ENCODE measurements at regions of chr22 and their contacts with region 1.

Region 1: DNA sequence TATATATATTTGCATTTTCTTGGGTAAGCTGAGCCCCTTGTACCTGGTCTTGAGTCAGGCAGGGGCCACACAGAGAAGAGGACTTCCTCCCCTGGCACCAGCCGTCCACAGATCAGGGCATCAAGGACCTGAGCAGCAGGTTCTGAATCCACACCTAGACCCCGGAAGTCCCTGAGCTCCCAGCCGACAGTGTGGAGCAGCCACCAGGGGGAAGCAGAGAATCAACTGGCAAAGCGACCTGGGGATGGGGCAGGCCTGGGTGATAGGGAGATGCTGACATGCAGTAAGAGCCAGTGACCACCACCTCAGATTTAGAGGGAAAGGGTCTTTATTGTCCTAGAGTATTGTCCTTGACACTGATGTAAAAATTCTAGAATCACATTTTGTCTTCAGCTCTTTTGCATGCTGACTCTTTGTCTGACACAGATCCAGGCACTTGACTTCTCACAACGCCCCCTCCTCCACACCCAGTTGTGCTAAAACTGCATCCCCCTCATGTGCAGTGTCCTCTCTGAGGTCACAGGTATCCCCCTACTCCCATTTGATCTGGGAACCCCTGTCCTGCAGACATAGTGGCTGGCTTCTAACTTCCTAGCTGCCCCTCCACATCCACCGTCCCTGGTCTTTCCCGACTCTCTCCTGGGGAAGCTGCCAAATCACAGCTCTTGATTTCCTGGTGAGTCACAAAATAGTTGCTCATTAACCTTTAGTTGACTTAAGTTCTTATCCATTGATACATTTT is 109.3 kb downstream of the GGTLC2 start:
- DNase-seq: peak; percentile 54 to 74
- ATAC-seq: peak; percentile 89 to 97
- H3K4me3 ChIP-seq: no peak overlapping the region
- H3K27ac ChIP-seq: 0 out of 6 replicates have a peak overlapping the region, but pooled peaks of 1 of the 2 experiments have one; percentile 39
- H3K4me1 ChIP-seq: peaks cover 5% of the 10 kb centered on the region; the same call in 1 of the 3 replicates
- CTCF ChIP-seq: peak; percentile 43; the same call in 2 of the 3 replicates
- EP300 ChIP-seq: no peak
- POLR2A ChIP-seq: no peak
- RAD21 ChIP-seq: peak; percentile 36 to 46; a peak in 3 of 5 replicates

Region 2: GRCh38 chr22:22463855-22464540 is 289.7 kb before region 1 on chr22:
- CTCF ChIA-PET with region 1: interaction called, 12 read pairs
- POLR2A ChIA-PET with region 1: no interaction called
- DNase-seq: peak; percentile 38 to 52
- ATAC-seq: peak; percentile 73 to 93; a peak in 5 of 6 replicates
- H3K4me3 ChIP-seq: peak overlapping the region; percentile 18; the same call in 1 of the 3 replicates
- H3K27ac ChIP-seq: no peak overlapping the region
- H3K4me1 ChIP-seq: no peaks in the 10 kb centered on the region
- CTCF ChIP-seq: peak; percentile 73
- EP300 ChIP-seq: no peak
- POLR2A ChIP-seq: no peak
- RAD21 ChIP-seq: peak; percentile 85 to 86

Region 3: GRCh38 chr22:22743128-22743760 is 10.5 kb before region 1 on chr22:
- CTCF ChIA-PET with region 1: interaction called, 11 read pairs
- POLR2A ChIA-PET with region 1: no interaction called
- DNase-seq: no peak
- ATAC-seq: no peak
- H3K4me3 ChIP-seq: no peak overlapping the region
- H3K27ac ChIP-seq: no peak overlapping the region
- H3K4me1 ChIP-seq: no peaks in the 10 kb centered on the region
- CTCF ChIP-seq: no peak
- EP300 ChIP-seq: no peak
- POLR2A ChIP-seq: no peak
- RAD21 ChIP-seq: no peak

Region 4: GRCh38 chr22:22770280-22770871 is 16.7 kb after region 1 on chr22:
- CTCF ChIA-PET with region 1: interaction called, 31 read pairs
- POLR2A ChIA-PET with region 1: no interaction called
- DNase-seq: peak; percentile 30 to 33
- ATAC-seq: peak; percentile 83 to 91
- H3K4me3 ChIP-seq: no peak overlapping the region
- H3K27ac ChIP-seq: no peak overlapping the region
- H3K4me1 ChIP-seq: no peaks in the 10 kb centered on the region
- CTCF ChIP-seq: peak; percentile 57
- EP300 ChIP-seq: no peak
- POLR2A ChIP-seq: no peak
- RAD21 ChIP-seq: peak in 1 of 2 experiments; percentile 23; a peak in 2 of 5 replicates

Region 5: DNA sequence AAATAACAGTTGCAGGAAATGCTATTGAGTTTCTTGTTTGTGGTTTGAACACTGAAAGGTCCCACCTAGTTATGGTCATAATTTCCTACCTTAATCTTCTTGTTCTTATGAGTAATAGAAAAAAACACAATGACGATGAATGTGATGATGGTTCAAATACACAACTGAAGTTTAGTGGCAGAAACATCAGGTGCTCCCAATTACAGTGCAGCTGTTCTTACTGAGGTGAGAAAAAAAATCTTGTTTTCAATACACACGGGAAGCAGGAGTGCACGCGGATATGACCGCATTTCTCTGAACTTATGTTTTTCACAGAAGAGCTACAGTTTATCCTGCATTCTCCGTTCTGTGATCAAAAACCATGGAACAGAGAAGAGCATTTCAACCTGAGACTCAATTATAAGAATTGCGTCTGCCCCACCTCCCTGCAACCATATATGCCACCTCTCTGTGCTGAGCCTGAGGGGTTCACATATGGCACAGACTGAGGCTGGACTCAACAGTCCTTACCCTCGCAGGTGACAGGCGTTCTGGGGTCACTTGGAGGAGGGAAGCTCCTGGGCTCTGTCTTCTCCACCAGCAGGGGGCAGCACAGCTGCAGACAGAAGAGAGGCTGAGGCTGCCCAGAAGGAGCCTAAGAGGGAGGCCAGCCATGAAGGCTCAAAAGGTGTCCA is 34.2 kb after region 1 on chr22:
- CTCF ChIA-PET with region 1: interaction called, 10 read pairs
- POLR2A ChIA-PET with region 1: no interaction called
- DNase-seq: peak; percentile 39 to 52
- ATAC-seq: peak; percentile 80 to 95; a peak in 5 of 6 replicates
- H3K4me3 ChIP-seq: no peak overlapping the region
- H3K27ac ChIP-seq: no peak overlapping the region
- H3K4me1 ChIP-seq: no peaks in the 10 kb centered on the region
- CTCF ChIP-seq: peak; percentile 58; the same call in 2 of the 3 replicates
- EP300 ChIP-seq: no peak
- POLR2A ChIP-seq: no peak
- RAD21 ChIP-seq: peak; percentile 30 to 46; a peak in 4 of 5 replicates

Region 6: DNA sequence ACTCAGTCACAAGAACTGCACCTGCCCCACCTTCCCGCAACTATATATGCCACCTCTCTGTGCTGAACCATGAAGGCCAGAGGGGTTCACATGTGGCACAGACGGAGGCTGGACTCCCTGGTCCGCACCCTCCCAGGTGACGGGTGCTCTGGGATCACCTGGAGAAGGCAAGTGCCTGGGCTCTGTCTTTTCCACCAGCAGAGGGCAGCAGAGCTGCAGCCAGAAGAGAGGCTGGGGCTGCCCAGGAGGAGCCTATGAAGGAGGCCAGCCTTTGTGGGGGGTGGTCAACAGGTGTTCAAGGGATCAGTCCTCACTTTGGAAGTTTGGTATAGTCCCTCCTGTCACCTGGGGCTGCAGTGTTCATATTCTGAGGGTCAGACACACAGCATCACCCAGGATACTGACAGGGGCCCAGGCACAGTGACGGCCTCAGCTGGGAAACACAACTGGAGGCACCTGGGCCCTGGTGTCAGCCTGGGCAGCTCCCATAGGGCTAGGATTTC is 94.7 kb after region 1 on chr22:
- CTCF ChIA-PET with region 1: interaction called, 17 read pairs
- POLR2A ChIA-PET with region 1: no interaction called
- DNase-seq: peak; percentile 18 to 38
- ATAC-seq: peak; percentile 87 to 98
- H3K4me3 ChIP-seq: no peak overlapping the region
- H3K27ac ChIP-seq: no peak overlapping the region
- H3K4me1 ChIP-seq: no peaks in the 10 kb centered on the region
- CTCF ChIP-seq: peak; percentile 72
- EP300 ChIP-seq: no peak
- POLR2A ChIP-seq: no peak
- RAD21 ChIP-seq: peak; percentile 56 to 63